Psoas muscle (tissue), 8 donors: ENCODE measurements at regions of chr7 and their contacts with region 1.

Region 1: GRCh38 chr7:6419310-6419773 is 28.4 kb downstream of the DAGLB start:
- DNase-seq: peak; percentile 85 to 96
- ATAC-seq: peak; percentile 90 to 93 (median 92)
- H3K4me3 ChIP-seq: no peak overlapping the region
- H3K27ac ChIP-seq: peak overlapping the region; percentile 81
- H3K4me1 ChIP-seq: peaks cover 19% of the 10 kb centered on the region
- H3K27me3 ChIP-seq: no peaks in the 10 kb centered on the region
- CTCF ChIP-seq: no peak

Region 2: DNA sequence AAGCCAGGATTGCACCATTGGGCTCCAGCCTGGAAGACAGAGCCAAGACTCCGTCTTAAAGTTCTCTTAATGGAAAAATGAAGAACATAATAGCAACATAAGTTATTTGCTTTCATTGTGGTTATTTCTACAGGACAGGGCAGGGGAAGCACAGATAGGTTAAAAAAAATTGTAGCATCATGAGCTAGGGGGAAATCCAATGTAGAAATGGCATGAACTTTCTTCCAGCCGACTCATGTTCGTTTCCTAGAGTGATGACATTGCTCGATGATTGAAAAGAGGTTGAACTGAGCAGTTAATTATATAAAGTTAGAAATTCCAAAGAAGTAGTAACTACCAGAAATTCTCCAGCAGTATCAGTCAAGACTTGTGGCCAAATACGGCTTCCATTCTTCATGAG is 36.5 kb before region 1 on chr7:
- intact Hi-C with region 1: loop called in 1 of 2 experiments (anchors 5 kb)
- DNase-seq: no peak
- ATAC-seq: peak in 1 of 4 donors; percentile 24
- H3K4me3 ChIP-seq: no peak overlapping the region
- H3K27ac ChIP-seq: peak overlapping the region; percentile 36
- H3K4me1 ChIP-seq: peaks cover 85% of the 10 kb centered on the region
- H3K27me3 ChIP-seq: no peaks in the 10 kb centered on the region
- CTCF ChIP-seq: no peak

Region 3: GRCh38 chr7:6530626-6531491 is 111.5 kb after region 1 on chr7:
- intact Hi-C with region 1: no loop called
- DNase-seq: no peak
- ATAC-seq: no peak
- H3K4me3 ChIP-seq: peak overlapping the region; percentile 54
- H3K27ac ChIP-seq: no peak overlapping the region
- H3K4me1 ChIP-seq: peaks cover 4% of the 10 kb centered on the region
- H3K27me3 ChIP-seq: peaks cover 0 to 73% (median 35%) of the 10 kb centered on the region in 3 donors
- CTCF ChIP-seq: no peak